Activated CD4-positive, alpha-beta memory T cell treated with anti-CD3 and anti-CD28 coated beads for 36 hours (primary cell): ENCODE measurements at regions of chrX and their contacts with region 1.

Region 1: GRCh38 chrX:57286507-57287251 is at the start of gene FAAH2:
- DNase-seq: peak; percentile 80
- H3K4me3 Mint-ChIP-seq: peak within 1 kb of the TSS; percentile 91
- H3K27ac Mint-ChIP-seq: peak within 1 kb of the TSS; percentile 95
- H3K4me1 Mint-ChIP-seq: peaks cover 34% of the 10 kb centered on the region
- H3K27me3 Mint-ChIP-seq: no peaks in the 10 kb centered on the region
- total RNA-seq, gene FAAH2: 10.3 to 12.1 TPM

Region 2: DNA sequence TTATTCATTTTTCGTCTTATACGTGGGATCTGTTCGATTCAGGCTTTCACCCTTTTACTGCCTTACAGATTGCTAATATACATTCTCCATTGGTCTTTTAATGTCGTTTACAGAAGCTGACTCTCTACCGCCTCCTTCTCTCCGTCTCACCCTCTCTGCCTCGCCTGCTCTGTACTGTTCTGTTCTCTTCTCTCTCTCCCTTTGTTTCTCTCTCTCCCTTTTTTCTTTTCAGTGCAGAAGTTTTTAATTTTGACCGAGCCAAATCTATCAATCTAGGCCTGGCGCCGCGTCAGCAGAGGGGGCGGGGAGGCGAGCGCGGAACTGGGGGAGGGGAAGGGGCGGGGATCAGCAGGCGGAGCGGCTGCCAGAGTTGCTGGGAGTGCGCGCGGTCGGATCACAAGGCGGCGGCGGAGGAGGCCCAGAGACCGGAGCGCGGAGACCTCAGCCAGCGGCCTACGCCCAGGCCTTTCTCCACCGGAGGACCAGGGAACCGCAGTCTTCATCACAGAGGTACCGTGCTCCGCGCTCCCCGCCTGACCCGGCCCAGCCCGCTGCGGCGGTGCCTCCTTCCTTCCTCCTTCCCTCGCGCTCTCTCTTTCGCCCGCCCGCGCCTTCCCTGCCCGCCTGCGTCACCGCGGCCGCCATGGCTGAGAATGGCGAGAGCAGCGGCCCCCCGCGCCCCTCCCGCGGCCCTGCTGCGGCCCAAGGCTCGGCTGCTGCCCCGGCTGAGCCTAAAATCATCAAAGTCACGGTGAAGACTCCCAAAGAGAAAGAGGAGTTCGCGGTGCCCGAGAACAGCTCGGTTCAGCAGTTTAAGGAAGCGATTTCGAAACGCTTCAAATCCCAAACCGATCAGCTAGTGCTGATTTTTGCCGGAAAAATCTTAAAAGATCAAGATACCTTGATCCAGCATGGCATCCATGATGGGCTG is 723.2 kb before region 1 on chrX and contains the start of gene UBQLN2:
- CTCF ChIA-PET with region 1: no interaction called
- POLR2A ChIA-PET with region 1: interaction called, 3 read pairs
- intact Hi-C with region 1: loop called (anchors 5 kb)
- DNase-seq: peak; percentile 87
- H3K4me3 Mint-ChIP-seq: peak within 1 kb of the TSS; percentile 86
- H3K27ac Mint-ChIP-seq: peak within 1 kb of the TSS; percentile 98
- H3K4me1 Mint-ChIP-seq: peaks cover 3% of the 10 kb centered on the region
- H3K27me3 Mint-ChIP-seq: no peaks in the 10 kb centered on the region
- total RNA-seq, gene UBQLN2: 52.0 to 52.2 TPM

Region 3: GRCh38 chrX:56813318-56813837 is 473.3 kb before region 1 on chrX:
- CTCF ChIA-PET with region 1: no interaction called
- POLR2A ChIA-PET with region 1: no interaction called
- intact Hi-C with region 1: loop called (anchors 5 kb)
- DNase-seq: peak; percentile 69
- H3K4me3 Mint-ChIP-seq: peak overlapping the region; percentile 68
- H3K27ac Mint-ChIP-seq: peak overlapping the region; percentile 93
- H3K4me1 Mint-ChIP-seq: peaks cover 42% of the 10 kb centered on the region
- H3K27me3 Mint-ChIP-seq: no peaks in the 10 kb centered on the region

Region 4: DNA sequence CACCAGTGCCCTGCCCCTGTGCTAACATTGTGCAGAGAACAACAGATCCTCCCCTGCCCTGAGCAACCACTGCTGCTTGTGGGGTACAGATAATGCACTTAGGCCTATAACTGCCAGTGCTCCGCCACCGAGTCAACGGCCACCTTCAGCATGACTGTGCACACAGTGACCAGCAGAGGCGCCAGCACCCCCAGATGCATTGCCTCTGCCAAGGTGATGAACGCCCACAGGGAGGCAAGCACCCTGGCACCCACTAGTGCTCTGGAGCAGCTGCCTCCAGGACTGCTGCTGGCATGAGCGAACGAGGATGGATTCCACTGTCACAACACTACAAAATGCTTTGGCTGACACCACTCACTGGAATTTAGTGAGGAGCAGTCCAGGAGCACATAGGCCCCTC is 203.5 kb before region 1 on chrX:
- CTCF ChIA-PET with region 1: no interaction called
- POLR2A ChIA-PET with region 1: no interaction called
- intact Hi-C with region 1: no loop called
- DNase-seq: no peak
- H3K4me3 Mint-ChIP-seq: no peak overlapping the region
- H3K27ac Mint-ChIP-seq: no peak overlapping the region
- H3K4me1 Mint-ChIP-seq: no peaks in the 10 kb centered on the region
- H3K27me3 Mint-ChIP-seq: no peaks in the 10 kb centered on the region

Region 5: DNA sequence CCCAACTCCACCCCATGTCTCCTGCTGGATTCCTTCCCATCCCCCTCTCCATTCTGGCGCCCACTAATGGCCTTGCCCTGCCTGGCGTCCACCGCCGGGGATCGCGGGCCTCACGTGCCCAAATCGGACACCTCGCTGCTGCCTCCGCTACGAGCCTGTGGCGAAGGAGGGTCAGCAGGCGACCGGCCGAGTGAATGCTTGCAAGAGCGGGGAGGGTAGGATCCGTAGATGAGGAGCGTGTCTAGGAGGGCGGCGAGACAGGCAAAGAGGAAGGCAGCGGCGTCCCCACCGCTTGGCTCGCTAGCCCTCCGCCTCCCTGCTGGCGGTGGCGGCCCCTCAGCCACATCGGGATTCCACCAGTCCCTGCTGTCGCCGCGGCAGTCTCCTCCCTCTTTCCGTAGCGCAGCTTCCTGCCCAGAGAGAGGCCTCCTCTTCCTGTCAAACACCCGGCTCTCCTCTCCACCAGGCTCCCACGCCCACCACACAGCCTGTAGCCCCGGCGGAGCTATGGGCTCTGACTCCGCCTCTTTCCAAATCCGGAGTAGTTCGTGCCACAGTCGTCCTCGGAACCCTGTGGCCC is 165.4 kb before region 1 on chrX and contains the start of gene SPIN2B:
- CTCF ChIA-PET with region 1: no interaction called
- POLR2A ChIA-PET with region 1: no interaction called
- intact Hi-C with region 1: loop called (anchors 1 kb)
- DNase-seq: peak; percentile 90
- H3K4me3 Mint-ChIP-seq: peak within 1 kb of the TSS; percentile 84
- H3K27ac Mint-ChIP-seq: peak within 1 kb of the TSS; percentile 86
- H3K4me1 Mint-ChIP-seq: peaks cover 5% of the 10 kb centered on the region
- H3K27me3 Mint-ChIP-seq: no peaks in the 10 kb centered on the region
- total RNA-seq, gene SPIN2B: 5.1 to 7.7 TPM

Region 6: DNA sequence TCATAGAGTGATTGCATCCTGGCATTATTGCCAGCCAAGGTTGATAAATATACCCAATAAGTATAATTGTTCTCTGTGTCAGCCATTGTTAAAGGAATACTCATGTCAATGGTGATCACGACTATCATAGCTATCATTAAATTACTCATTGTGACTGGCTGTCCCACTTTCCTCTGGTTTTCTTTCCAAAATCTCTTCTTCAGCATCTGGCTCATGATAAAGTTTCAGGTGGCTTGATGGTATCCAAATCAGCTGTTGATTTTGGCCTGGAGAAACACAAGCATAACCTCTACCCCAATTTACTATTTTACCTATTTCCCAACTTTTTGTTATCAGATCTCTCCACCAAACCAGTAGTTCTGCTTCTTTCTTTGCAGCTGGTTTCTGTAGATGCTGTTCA is 82.4 kb before region 1 on chrX:
- CTCF ChIA-PET with region 1: no interaction called
- POLR2A ChIA-PET with region 1: no interaction called
- intact Hi-C with region 1: no loop called
- DNase-seq: no peak
- H3K4me3 Mint-ChIP-seq: no peak overlapping the region
- H3K27ac Mint-ChIP-seq: no peak overlapping the region
- H3K4me1 Mint-ChIP-seq: no peaks in the 10 kb centered on the region
- H3K27me3 Mint-ChIP-seq: no peaks in the 10 kb centered on the region

Region 7: DNA sequence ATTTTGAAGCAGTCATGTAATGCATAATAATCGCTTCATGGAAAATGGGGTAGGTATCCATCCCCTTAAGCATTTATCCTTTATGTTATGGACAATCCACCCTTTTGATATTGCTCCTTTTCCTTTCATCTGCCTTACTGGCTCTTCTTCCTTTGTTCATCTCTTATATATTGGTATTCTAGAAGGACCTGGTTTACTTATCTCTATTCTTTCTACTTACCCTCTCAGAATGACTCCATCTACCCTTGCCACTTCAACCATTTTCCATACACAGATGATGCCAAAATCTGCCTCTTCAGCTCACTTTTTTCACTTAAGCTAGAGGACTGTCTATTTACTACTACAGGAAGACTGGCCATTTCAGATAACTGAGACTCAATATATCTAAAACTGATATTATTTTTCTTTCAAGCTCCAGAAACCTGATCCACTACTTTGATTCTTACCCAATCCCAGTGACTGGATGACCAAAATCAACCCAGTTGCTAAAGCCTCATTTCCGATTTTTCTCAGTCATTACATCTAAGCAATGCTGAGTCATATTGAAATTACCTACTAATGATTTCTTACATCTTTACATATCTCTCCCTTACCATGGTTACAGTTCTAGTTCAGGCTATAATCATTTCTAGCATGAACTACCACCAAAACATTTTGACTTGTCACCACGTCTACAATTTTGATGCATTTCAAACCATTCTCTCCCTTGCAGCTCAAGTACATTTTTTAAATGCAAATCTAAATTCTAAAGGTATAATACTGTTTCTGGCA is 93.5 kb after region 1 on chrX:
- CTCF ChIA-PET with region 1: no interaction called
- POLR2A ChIA-PET with region 1: no interaction called
- intact Hi-C with region 1: loop called (anchors 1 kb)
- DNase-seq: no peak
- H3K4me3 Mint-ChIP-seq: peak overlapping the region; percentile 20
- H3K27ac Mint-ChIP-seq: peak overlapping the region; percentile 87
- H3K4me1 Mint-ChIP-seq: peaks cover 17% of the 10 kb centered on the region
- H3K27me3 Mint-ChIP-seq: no peaks in the 10 kb centered on the region

Region 8: DNA sequence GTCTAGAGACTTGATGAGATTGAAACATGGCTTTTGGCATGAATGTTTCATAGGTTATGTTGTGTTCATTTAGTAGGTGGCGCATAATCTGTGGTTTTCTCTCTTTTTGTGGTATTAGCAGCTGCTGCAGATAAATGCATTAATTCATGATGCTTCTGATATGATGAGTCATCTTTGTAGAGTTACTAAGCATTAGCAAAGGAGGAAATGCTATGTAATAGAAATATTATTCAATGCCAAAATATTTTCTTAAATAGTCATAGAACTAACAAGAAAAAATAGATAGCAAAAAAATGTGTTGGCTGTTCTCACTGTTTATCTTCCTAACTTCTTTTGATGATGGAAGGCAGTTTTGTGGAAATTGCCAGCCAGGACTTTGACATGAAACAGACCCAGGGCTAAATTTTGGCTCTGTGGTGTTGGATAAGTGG is 308.7 kb after region 1 on chrX:
- CTCF ChIA-PET with region 1: interaction called, 3 read pairs
- POLR2A ChIA-PET with region 1: no interaction called
- intact Hi-C with region 1: loop called (anchors 2 kb)
- DNase-seq: no peak
- H3K4me3 Mint-ChIP-seq: peak overlapping the region; percentile 72
- H3K27ac Mint-ChIP-seq: peak overlapping the region; percentile 71
- H3K4me1 Mint-ChIP-seq: peaks cover 35% of the 10 kb centered on the region
- H3K27me3 Mint-ChIP-seq: no peaks in the 10 kb centered on the region